GM10248 (cell line): ENCODE measurements at regions of chr4 and their contacts with region 1.

Region 1: DNA sequence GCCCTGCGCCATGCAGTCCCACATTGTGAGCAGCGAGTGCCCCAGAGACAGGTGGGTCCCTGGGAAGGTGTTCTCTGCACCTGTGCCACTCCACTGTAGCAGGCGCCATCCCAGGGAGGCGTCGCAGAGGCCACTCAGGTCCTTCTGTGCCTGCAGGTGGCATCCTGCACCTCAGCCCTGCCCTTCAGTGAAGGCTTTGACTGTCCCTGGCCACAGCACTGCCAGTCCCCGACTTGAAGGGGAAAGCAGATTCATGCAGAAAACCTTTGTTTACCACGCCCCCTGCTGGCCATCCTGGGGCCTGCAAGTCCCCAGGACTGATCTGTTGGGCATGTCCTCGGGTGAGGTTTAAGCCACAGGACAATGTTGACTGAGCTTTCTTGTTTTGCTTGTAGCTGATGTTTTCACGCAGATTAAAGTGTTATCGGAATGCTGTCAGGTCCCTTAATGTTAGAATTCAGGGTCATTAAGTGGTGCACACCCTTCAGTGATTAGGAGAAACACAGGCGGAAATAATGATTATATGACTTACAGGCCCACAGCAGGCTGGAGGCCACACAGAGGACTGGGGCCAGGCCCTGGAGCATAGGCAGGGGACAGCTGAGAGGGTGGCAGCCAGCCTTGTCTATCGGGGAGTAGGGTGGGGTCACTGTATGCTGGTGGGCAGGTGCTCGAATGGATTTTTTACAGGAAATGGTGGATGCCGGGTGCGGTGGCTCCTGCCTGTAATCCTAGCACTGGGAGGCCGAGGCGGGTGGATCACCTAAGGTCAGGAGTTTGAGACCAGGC is 5.0 kb downstream of the TACC3 start:
- DNase-seq: peak; percentile 84
- CTCF ChIP-seq: peak; percentile 94

Region 2: DNA sequence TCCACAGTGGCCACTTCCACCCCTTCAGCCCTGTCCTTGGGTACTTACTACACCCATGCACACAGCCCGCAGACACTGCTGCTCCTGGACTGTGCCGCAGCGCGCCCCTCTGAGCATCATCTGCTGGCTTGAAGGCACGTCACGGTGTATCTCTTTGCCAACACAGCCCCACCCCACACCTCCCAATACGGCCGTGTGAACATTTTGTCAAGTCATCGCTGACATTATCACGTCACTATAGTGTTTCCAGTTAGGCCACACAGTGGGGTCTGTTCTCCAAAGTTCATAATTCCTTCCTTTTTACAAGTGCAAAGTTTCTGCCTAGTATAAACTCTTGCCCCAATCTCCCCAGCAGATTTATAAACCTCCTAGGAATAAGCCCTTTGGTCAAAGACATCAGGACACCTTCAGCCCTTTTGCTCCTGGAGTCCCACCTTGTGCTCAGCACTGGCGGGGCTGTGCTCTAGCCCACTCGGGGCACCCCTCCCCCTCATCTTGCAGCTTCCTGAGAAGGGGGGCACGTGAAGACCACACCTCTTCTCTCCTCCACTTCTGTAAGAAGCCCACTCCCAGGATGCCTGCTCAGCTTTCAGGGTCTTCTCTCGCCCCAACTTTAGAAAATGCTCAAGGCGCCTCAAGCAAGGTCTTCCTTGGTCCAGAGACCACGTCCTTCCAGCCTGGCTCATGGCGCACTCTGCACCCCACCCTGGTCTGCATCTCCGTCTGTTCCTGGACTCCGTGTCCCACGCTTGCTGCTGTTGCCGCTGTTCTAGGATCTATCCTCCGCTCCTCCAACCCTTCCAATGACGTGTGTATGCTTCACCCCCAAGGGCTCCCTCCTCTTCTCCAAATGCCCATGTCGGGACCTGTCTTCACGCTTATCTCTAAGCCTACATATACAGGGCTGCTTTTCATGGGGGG is 49.5 kb before region 1 on chr4:
- CTCF ChIA-PET with region 1: no interaction called
- POLR2A ChIA-PET with region 1: no interaction called
- DNase-seq: no peak
- CTCF ChIP-seq: no peak

Region 3: DNA sequence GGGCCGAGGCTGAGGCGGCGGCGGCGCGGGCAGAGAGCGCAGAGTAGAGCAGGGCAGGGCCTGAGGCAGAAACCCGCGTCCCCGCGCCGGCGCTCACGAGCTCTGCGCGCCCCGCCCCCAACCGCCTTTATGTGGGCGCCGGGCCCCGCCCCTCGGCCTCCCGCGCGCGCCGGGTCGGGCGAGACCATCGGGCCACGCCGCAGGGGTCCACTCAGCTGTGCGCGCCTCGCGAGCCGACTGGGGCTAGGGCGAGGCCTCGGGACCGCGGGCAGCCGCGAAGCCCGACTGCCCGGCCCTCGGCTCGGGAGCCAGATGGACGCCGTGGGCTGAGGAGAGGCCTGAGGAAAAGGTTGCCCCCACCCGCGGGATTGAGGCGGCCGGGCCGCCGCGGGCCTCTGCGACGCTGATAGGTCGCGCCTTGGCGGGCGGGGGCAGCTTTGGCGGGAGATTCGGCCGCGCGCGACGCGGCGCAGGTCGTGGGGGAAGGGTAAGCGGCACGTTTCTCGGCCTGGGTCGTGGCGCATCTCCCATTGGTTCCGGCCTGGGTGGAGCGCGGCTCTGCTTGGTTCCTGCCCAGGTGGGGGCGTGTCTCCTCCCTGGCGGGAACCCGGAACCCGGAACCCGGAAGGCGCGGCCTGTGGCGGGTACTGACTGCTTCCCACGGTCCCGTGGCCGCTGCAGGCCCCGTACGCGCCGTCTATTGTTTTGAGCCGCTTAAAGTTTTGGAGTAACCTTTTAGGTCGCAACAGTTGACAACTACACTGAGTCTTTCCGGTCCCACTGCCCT is 13.9 kb before region 1 on chr4 and contains the start of gene SLBP:
- CTCF ChIA-PET with region 1: interaction called, 25 read pairs
- POLR2A ChIA-PET with region 1: interaction called, 6 read pairs
- DNase-seq: peak; percentile 98
- CTCF ChIP-seq: no peak